ENCODE measurements at regions of chr3 and their contacts with region 1.

Region 1: GRCh38 chr3:150408221-150409102 is at the start of gene TSC22D2:
- DNase-seq: peak; percentile 92
- H3K4me3 Mint-ChIP-seq: peak within 1 kb of the TSS; percentile 93
- H3K27ac Mint-ChIP-seq: peak within 1 kb of the TSS; percentile 90
- H3K4me1 Mint-ChIP-seq: peaks cover 26% of the 10 kb centered on the region
- H3K27me3 Mint-ChIP-seq: peaks cover 7% of the 10 kb centered on the region
- total RNA-seq, gene TSC22D2: 20.3 and 21.3 TPM in 2 replicates

Region 2: GRCh38 chr3:149969940-149970715 is 438.3 kb before region 1 on chr3:
- intact Hi-C with region 1: loop called (anchors 2 kb)
- DNase-seq: peak; percentile 63
- H3K4me3 Mint-ChIP-seq: peak overlapping the region; percentile 76
- H3K27ac Mint-ChIP-seq: no peak overlapping the region
- H3K4me1 Mint-ChIP-seq: peaks cover 12% of the 10 kb centered on the region
- H3K27me3 Mint-ChIP-seq: peaks cover 51% of the 10 kb centered on the region

Region 3: DNA sequence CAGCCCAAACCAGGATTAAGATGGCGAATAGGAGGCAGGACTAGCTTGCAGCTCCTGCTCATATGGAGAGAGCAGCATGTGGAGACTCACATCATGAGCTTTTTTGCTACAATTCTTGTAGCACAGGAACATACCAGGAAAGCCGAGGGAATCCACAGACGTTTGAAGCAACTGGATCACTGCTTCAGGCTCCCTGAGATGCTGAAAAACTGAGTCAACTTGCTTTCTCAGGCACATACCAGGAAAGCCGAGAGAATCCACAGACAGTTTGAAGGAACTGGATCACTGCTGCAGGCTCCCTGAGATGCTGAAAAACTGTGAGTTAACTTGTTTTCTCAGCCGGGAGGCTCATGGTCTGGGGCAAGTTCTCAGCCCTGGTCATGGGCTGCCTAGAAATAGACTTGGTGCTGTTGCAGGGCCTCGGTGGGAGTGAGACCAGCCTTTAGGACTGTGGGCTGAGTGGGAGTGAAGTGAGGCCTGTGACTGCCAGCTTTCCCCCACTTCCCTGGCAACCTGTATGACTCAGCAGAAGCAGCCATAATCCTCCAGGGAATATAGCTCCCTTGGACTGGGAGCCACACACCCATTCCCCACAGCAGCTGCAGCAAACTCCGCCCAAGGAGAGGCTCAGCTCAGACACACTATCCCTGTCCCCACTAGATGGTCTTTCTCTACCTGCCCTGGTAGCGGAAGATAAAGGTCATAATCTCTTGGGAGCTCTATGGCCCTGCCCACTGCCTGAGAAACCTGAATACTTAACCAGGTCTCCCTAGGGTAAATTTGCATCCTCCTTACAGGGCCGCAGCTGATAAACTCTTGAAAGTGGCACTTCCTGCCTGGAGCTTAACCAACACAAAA is 385.9 kb before region 1 on chr3:
- intact Hi-C with region 1: no loop called
- DNase-seq: no peak
- H3K4me3 Mint-ChIP-seq: no peak overlapping the region
- H3K27ac Mint-ChIP-seq: no peak overlapping the region
- H3K4me1 Mint-ChIP-seq: no peaks in the 10 kb centered on the region
- H3K27me3 Mint-ChIP-seq: peaks cover 7% of the 10 kb centered on the region

Region 4: GRCh38 chr3:150278843-150279381 is 129.6 kb before region 1 on chr3:
- intact Hi-C with region 1: no loop called
- DNase-seq: no peak
- H3K4me3 Mint-ChIP-seq: no peak overlapping the region
- H3K27ac Mint-ChIP-seq: no peak overlapping the region
- H3K4me1 Mint-ChIP-seq: no peaks in the 10 kb centered on the region
- H3K27me3 Mint-ChIP-seq: peaks cover 25% of the 10 kb centered on the region

Region 5: GRCh38 chr3:150303776-150304175 is 104.7 kb before region 1 on chr3:
- intact Hi-C with region 1: loop called (anchors 5 kb)
- DNase-seq: no peak
- H3K4me3 Mint-ChIP-seq: no peak overlapping the region
- H3K27ac Mint-ChIP-seq: no peak overlapping the region
- H3K4me1 Mint-ChIP-seq: no peaks in the 10 kb centered on the region
- H3K27me3 Mint-ChIP-seq: peaks cover 44% of the 10 kb centered on the region

Region 6: DNA sequence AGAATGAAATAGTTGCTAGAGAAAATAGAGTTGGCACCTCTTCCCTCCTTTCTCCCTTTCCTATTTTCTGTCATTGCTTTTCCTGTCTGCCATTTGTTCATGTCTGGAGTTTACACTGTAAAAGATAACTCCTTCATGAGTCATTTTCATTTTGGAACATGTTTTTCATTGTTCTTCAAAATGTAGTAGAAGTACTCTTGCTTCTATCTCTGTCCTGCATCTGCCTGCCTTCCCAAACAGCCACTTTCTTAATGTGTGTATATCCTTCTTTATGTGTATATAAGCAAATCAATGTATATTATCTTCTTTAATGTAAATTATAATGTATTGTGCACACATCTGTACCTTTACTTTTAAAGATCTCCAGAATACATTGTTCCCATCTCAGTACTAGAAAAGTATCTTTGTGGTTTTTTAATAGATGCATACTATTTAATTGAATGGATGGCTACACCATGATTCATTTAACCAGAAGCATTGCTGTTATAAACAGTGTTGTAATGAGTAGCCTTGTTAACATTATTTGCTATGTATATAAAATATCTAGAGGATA is 40.8 kb after region 1 on chr3:
- intact Hi-C with region 1: loop called (anchors 5 kb)
- DNase-seq: no peak
- H3K4me3 Mint-ChIP-seq: no peak overlapping the region
- H3K27ac Mint-ChIP-seq: no peak overlapping the region
- H3K4me1 Mint-ChIP-seq: peaks cover 21% of the 10 kb centered on the region
- H3K27me3 Mint-ChIP-seq: no peaks in the 10 kb centered on the region

Region 7: DNA sequence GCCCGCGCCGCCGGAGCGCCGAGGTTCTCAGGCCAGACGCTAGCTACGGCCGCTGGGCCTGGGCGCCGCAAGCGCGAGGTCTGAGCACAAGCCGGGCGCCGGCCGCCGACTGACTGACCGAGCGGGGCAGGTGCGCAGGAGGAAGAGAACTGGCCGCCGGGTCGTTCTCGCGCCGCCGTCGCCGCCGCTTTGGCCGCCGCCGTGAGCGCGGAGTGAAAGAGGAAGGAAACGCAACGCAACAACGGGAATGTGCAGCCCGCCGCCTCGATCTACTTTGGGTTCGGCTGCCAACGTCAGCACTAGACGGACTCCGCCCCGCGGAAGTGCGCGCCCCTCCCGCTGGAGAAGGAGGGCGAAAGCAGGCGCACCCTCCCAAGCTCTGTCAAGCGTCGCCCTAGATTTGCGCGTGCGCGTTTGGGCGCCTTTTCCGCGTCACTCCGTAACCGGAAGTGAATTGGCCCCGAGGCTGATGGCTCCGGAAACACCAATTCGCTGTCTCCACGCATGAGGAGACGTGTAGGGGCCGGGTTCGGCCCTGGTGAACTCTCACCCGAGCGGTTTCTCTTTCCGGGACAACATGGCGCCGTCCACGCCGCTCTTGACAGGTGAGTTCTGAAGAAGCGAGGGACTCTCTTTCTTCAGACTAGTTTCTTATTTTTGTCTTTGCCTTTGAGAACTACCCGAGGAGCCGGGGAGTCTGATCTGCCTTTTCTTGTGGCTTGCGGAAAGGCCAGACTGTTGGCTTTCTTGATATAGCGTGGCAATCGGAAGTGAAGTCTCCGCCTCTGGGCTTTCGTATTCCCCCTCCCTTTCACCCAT is 138.0 kb after region 1 on chr3 and contains the starts of genes EIF2A and SERP1:
- intact Hi-C with region 1: loop called (anchors 1 kb)
- DNase-seq: peak; percentile 100
- H3K4me3 Mint-ChIP-seq: peak within 1 kb of the TSS; percentile 97
- H3K27ac Mint-ChIP-seq: peak within 1 kb of the TSS; percentile 92
- H3K4me1 Mint-ChIP-seq: peaks cover 56% of the 10 kb centered on the region
- H3K27me3 Mint-ChIP-seq: no peaks in the 10 kb centered on the region
- total RNA-seq, gene EIF2A: 124 and 126 TPM in 2 replicates
- total RNA-seq, gene SERP1: 89.2 and 91.7 TPM in 2 replicates

Region 8: GRCh38 chr3:150675587-150675986 is 267.1 kb after region 1 on chr3:
- intact Hi-C with region 1: no loop called
- DNase-seq: no peak
- H3K4me3 Mint-ChIP-seq: no peak overlapping the region
- H3K27ac Mint-ChIP-seq: no peak overlapping the region
- H3K4me1 Mint-ChIP-seq: peaks cover 5% of the 10 kb centered on the region
- H3K27me3 Mint-ChIP-seq: peaks cover 13% of the 10 kb centered on the region

Region 9: GRCh38 chr3:150737874-150738713 is 329.6 kb after region 1 on chr3:
- intact Hi-C with region 1: loop called (anchors 2 kb)
- DNase-seq: no peak
- H3K4me3 Mint-ChIP-seq: peak overlapping the region; percentile 53
- H3K27ac Mint-ChIP-seq: peak overlapping the region; percentile 100
- H3K4me1 Mint-ChIP-seq: peaks cover 91% of the 10 kb centered on the region
- H3K27me3 Mint-ChIP-seq: no peaks in the 10 kb centered on the region

Region 10: DNA sequence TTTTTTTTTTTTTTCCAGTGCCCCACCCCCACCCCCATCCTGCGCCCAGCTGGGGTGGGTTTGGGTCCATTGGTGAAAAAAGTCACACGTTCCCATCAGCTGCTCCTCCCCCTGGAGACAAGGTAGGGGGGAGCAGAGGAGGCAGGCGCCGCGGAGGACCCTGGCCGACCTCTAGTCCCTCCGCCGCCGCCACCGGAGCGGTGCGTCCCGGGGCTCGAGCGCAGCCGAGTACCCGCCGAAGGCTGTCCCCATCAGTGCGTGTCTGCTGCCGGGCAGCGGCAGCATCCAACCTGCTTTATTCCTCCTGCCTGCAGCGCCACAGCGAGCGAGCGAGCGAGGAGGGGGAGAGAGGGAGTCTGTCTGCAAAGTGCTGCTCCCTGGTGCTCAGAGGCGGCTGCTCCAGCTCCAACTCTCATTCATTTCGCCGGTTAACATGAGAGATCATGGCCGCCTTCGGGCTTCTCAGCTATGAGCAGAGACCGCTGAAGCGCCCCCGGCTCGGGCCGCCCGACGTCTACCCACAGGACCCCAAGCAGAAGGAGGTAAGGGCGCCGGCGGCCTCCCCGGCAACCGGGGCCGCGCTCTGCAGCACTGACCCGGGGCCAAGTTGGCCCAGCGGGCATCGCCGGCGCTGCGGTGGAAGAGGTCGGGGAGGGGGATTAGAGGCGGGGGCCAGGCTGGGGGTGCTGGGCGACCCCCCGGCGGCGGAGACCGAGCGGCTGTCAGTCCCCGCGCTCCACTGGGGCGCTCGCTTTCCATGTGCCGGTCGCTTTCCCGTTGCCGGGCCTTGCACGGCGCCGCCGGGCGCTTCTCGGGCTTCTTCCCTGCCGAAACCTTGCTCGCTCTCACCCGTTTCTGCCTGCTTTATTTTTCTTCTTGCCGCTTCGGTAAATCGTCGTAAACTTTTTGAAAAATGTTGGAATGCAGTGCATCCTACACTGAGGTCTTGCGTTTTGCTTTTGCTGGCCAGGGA is 678.3 kb after region 1 on chr3:
- intact Hi-C with region 1: loop called (anchors 10 kb)
- DNase-seq: peak; percentile 67
- H3K4me3 Mint-ChIP-seq: peak overlapping the region; percentile 86
- H3K27ac Mint-ChIP-seq: peak overlapping the region; percentile 46
- H3K4me1 Mint-ChIP-seq: peaks cover 11% of the 10 kb centered on the region
- H3K27me3 Mint-ChIP-seq: peaks cover 52% of the 10 kb centered on the region